ENCODE measurements at regions of chr6 and their contacts with region 1.

Region 1: DNA sequence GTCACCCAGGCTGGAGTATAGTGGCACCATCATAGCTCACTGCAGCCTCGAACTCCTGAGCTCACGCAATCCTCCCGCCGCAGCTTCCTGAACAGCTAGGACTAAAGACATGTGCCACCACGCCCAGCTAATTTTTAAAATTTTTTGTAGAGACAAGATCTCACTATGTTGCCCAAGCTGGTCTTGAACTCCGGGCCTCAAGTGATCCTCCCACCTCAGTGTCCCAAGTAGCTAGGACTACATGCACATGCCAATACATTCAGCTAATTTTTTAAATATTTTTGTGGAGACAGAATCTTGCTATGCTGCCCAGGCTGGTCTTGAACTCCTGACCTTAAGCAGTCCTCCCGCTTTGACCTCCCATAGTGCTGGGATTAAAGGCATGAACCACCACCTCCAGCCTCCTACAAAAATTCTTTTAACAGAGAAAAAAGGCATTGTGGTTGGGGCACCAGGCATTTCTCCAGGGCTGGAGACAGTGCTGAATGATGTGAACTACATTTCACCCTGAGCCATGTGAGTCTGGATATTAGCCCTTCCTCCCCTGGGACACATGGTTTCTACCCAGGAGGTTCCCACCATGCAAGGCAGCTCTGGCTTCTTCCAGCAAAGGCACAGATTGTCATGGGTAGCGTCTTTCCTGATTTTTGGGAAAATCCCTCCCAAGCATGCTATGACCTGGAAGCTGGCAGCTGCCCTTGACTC is 36.4 kb upstream of the CMTR1 start:
- DNase-seq: no peak
- H3K4me3 ChIP-seq: no peak overlapping the region
- H3K27ac ChIP-seq: no peak overlapping the region
- H3K4me1 ChIP-seq: no peaks in the 10 kb centered on the region
- H3K27me3 ChIP-seq: no peaks in the 10 kb centered on the region
- CTCF ChIP-seq: no peak

Region 2: GRCh38 chr6:37679539-37680476 is 283.2 kb after region 1 on chr6:
- intact Hi-C with region 1: loop called (anchors 10 kb)
- DNase-seq: no peak
- H3K4me3 ChIP-seq: no peak overlapping the region
- H3K27ac ChIP-seq: no peak overlapping the region
- H3K4me1 ChIP-seq: no peaks in the 10 kb centered on the region
- H3K27me3 ChIP-seq: no peaks in the 10 kb centered on the region
- CTCF ChIP-seq: no peak

Measured in colonic mucosa (tissue), 4 donors.